ENCODE measurements at regions of chr11 and their contacts with region 1.

Region 1: GRCh38 chr11:67630228-67630942 is 648 bp upstream of the NUDT8 start:
- DNase-seq: peak; percentile 99
- H3K4me3 Mint-ChIP-seq: peak overlapping the region; percentile 81
- H3K27ac Mint-ChIP-seq: peak overlapping the region; percentile 88
- H3K4me1 Mint-ChIP-seq: peaks cover 6% of the 10 kb centered on the region
- H3K27me3 Mint-ChIP-seq: no peaks in the 10 kb centered on the region

Region 2: GRCh38 chr11:67482825-67483798 is 147.3 kb before region 1 on chr11 and contains the start of gene AIP:
- CTCF ChIA-PET with region 1: no interaction called
- POLR2A ChIA-PET with region 1: no interaction called
- intact Hi-C with region 1: no loop called
- DNase-seq: peak; percentile 99
- H3K4me3 Mint-ChIP-seq: peak within 1 kb of the TSS; percentile 90
- H3K27ac Mint-ChIP-seq: peak within 1 kb of the TSS; percentile 99
- H3K4me1 Mint-ChIP-seq: peaks cover 42% of the 10 kb centered on the region
- H3K27me3 Mint-ChIP-seq: no peaks in the 10 kb centered on the region
- total RNA-seq, gene AIP: 160 to 169 TPM

Region 3: GRCh38 chr11:67606492-67607201 is 23.7 kb before region 1 on chr11 and contains the start of gene NDUFV1:
- CTCF ChIA-PET with region 1: interaction called, 18 read pairs
- POLR2A ChIA-PET with region 1: no interaction called
- intact Hi-C with region 1: loop called (anchors 2 kb)
- DNase-seq: peak; percentile 98
- H3K4me3 Mint-ChIP-seq: peak within 1 kb of the TSS; percentile 85
- H3K27ac Mint-ChIP-seq: peak within 1 kb of the TSS; percentile 76
- H3K4me1 Mint-ChIP-seq: peaks cover 13% of the 10 kb centered on the region
- H3K27me3 Mint-ChIP-seq: peaks cover 6% of the 10 kb centered on the region
- total RNA-seq, gene NDUFV1: 279 to 287 TPM

Region 4: DNA sequence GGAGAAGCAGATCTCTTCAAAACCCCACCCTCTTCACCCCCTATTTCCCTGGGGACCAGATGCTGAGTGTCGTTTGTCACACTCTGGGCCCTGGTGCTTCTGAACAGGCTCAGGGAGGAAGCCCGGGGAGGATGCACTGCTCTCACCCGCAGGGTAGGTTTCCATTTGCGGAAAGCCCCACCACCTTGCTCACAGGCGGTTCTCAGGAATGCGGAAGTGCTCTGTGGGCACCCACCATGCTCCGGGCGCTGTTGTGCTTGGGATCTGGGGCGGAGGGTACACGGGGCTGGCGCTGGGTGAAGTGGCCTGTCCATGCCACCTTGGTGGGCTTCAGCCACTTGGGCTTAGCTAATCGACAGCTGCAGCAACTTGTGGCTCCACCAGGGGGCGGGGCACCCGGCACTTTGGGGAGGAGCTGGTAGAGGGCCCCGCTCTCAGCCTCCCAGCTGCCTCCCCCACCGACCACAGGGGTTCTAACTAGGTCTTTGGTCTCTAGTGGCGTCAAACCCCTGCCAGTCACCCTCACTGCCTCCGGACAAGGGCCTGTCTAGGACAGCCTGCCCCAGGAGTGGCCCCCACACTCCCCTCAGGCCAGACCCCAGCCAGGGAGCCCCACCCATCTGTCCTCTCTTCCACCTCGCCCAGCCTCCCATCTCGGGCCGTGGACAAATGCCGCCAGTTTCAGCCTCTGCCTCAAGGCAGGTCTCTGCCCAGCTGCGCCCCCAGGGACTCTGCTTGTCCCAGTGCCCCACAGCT is 16.2 kb before region 1 on chr11:
- CTCF ChIA-PET with region 1: interaction called, 59 read pairs
- POLR2A ChIA-PET with region 1: interaction called, 17 read pairs
- intact Hi-C with region 1: loop called (anchors 2 kb)
- DNase-seq: peak; percentile 92
- H3K4me3 Mint-ChIP-seq: peak overlapping the region; percentile 79
- H3K27ac Mint-ChIP-seq: peak overlapping the region; percentile 98
- H3K4me1 Mint-ChIP-seq: peaks cover 26% of the 10 kb centered on the region
- H3K27me3 Mint-ChIP-seq: no peaks in the 10 kb centered on the region

Region 5: DNA sequence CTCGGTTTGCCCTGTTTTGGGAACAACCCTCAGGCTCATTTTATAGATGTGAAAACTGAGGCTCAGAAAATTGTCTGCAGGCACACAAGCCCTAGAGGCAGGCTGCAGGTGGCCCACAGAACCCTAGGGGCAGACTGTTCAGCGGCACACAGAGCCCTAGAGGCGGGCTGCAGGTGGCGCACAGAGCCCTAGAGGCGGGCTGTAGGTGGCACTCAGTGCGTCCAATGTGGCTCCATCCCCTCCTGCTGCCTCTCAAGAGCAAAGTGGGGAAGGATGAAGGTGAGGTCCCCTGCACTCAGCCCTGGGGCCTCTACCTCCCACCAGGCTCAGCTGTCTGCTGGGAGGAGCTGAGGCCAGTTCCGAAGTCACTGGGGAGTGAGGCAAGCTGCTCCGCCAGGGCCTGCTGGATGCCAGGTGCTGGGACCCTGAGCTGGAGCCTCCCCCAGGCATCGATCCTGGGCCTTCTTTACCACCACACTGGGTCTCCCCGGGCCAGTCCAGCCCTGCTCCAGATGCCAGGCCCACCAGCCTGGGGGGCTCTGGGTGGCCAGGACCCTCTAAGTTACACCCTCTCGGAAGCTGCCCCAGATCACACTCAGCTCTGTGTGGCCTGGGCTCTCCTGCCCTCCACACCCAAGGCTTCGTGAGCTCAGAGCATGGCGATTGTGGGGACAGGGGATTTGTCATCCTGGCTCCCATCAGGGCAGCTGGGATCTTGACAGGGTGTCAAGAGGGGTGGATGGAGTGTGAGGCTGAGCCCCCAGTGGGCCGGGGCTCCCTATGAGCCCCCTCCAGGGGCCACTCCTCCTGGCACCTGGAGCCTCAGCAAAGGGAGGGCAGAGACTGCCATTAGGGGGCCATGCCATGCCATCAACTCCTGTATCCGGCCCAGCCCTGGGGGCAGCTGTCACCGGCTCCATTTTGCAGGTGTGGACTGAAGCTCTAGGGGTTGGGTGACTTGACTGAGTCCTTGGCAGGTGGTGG is 18.0 kb after region 1 on chr11:
- CTCF ChIA-PET with region 1: interaction called, 56 read pairs
- POLR2A ChIA-PET with region 1: interaction called, 5 read pairs
- intact Hi-C with region 1: no loop called
- DNase-seq: peak; percentile 68
- H3K4me3 Mint-ChIP-seq: no peak overlapping the region
- H3K27ac Mint-ChIP-seq: no peak overlapping the region
- H3K4me1 Mint-ChIP-seq: peaks cover 27% of the 10 kb centered on the region
- H3K27me3 Mint-ChIP-seq: peaks cover 4% of the 10 kb centered on the region

Region 6: GRCh38 chr11:67656278-67656922 is 26.0 kb after region 1 on chr11:
- CTCF ChIA-PET with region 1: interaction called, 90 read pairs
- POLR2A ChIA-PET with region 1: interaction called, 8 read pairs
- intact Hi-C with region 1: loop called (anchors 1 kb)
- DNase-seq: no peak
- H3K4me3 Mint-ChIP-seq: no peak overlapping the region
- H3K27ac Mint-ChIP-seq: no peak overlapping the region
- H3K4me1 Mint-ChIP-seq: peaks cover 14% of the 10 kb centered on the region
- H3K27me3 Mint-ChIP-seq: no peaks in the 10 kb centered on the region

Region 7: GRCh38 chr11:67705264-67705663 is 74.9 kb after region 1 on chr11:
- CTCF ChIA-PET with region 1: no interaction called
- POLR2A ChIA-PET with region 1: no interaction called
- intact Hi-C with region 1: loop called (anchors 5 kb)
- DNase-seq: no peak
- H3K4me3 Mint-ChIP-seq: no peak overlapping the region
- H3K27ac Mint-ChIP-seq: no peak overlapping the region
- H3K4me1 Mint-ChIP-seq: no peaks in the 10 kb centered on the region
- H3K27me3 Mint-ChIP-seq: peaks cover 13% of the 10 kb centered on the region

Measured in activated CD4-positive, alpha-beta memory T cell treated with anti-CD3 and anti-CD28 coated beads for 36 hours (primary cell).